ENCODE measurements at regions of chr17 and their contacts with region 1.

Region 1: GRCh38 chr17:2041561-2042366 is at the start of gene OVCA2:
- DNase-seq: peak; percentile 55
- H3K4me3 ChIP-seq: peak within 1 kb of the TSS; percentile 84
- H3K27me3 ChIP-seq: no peaks in the 10 kb centered on the region
- CTCF ChIP-seq: peak; percentile 60
- polyA plus RNA-seq, gene OVCA2: 42.0 and 56.7 TPM in 2 replicates

Region 2: DNA sequence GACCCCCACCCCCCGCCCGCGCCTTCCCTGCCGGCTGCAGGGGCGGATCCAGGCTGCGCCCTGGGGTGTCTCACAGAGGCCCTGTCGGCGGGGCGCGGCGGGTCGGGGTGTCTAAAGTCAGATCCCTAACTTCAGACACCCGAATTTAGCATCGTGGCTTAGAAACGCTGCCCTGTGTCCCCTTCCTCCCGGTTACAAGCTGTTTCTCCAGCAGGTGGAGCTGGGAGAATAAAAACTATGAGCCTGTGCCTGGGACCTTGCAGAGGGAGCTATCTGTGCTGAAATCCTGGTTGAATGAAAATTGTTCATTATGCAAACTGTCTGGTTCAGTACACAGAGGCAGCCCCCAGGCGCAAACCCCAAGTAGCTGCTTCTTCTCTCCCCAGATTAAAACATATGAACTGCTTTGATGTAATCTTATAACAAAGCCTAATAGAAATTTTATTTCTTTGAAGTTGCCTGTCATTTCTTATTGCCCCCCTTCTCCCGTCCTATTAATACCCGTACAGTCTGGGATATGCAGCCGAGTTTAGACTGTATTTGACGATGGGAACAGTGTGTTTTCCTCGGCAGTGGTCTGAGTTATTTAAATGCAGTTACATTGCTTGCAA is 133.0 kb before region 1 on chr17:
- CTCF ChIA-PET with region 1: interaction called, 12 read pairs
- POLR2A ChIA-PET with region 1: no interaction called
- DNase-seq: peak; percentile 14
- H3K4me3 ChIP-seq: no peak overlapping the region; the same call in 1 of the 2 replicates
- H3K27me3 ChIP-seq: peaks cover 26% of the 10 kb centered on the region
- CTCF ChIP-seq: peak; percentile 79

Region 3: GRCh38 chr17:1931759-1932579 is 109.8 kb before region 1 on chr17:
- CTCF ChIA-PET with region 1: no interaction called
- POLR2A ChIA-PET with region 1: no interaction called
- DNase-seq: no peak
- H3K4me3 ChIP-seq: no peak overlapping the region
- H3K27me3 ChIP-seq: peaks cover 2% of the 10 kb centered on the region; the same call in 1 of the 2 replicates
- CTCF ChIP-seq: no peak

Region 4: DNA sequence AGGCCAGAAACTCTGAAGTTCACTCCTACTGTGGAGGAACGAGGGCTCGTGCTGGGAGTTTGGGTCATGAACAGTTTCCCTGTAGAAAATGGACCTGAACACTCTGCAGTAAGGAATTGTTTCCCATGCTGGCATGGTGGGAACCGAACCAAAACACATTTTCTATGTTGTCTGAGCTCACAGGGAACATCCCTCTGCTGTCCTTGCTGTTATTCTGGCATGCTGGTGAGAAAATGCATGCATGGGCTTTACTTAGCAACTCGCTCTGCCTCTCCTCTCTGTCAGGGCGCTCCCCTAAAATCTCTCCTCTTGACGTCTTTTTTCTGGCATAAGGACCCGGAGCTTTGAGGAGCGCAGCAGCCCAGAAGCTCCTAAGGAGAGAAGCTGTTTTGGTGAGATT is 22.0 kb before region 1 on chr17:
- CTCF ChIA-PET with region 1: interaction called, 5 read pairs
- POLR2A ChIA-PET with region 1: interaction called, 11 read pairs
- DNase-seq: no peak
- H3K4me3 ChIP-seq: no peak overlapping the region
- H3K27me3 ChIP-seq: peaks cover 33% of the 10 kb centered on the region
- CTCF ChIP-seq: no peak

Region 5: GRCh38 chr17:2521257-2521656 is 479.5 kb after region 1 on chr17:
- CTCF ChIA-PET with region 1: no interaction called
- POLR2A ChIA-PET with region 1: interaction called, 16 read pairs
- DNase-seq: no peak
- H3K4me3 ChIP-seq: no peak overlapping the region
- H3K27me3 ChIP-seq: no peaks in the 10 kb centered on the region
- CTCF ChIP-seq: no peak